ENCODE measurements at regions of chr11 and their contacts with region 1.

Region 1: DNA sequence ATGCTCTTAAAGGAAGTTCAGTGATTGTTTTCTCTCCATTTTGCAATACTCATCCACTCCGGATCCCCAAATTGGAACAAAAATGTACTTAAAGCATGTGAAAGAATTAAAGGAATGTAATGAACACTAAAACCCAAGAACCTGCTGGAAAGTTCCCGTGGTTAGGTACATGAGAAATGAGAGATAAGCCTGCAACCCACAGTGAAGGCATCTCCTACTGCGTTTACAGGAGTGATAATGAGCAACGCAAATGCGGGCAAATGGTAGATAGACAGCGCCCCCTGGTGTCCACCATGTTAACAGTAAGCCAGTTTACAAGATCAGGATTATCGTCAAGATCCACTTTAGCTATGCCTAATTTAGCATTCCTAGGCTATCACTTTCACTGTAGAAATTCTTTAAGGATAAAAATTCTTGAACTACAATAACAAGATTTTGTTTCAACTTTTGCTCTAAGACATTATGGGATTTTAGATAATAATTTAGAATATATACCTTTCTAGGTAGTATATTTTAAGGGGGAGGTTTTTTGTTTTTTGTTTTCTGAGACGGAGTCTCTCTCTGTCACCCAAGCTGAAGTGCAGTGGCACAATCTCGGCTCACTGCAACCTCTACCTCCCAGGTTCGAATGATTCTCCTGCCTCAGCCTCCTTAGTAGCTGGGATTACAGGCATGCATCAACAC is 29.9 kb downstream of the ALG9 start:
- DNase-seq: peak; percentile 66 to 92 (median 85)
- ATAC-seq: peak; percentile 95
- H3K4me3 ChIP-seq: no peak overlapping the region
- H3K4me3 Mint-ChIP-seq: no peak overlapping the region
- H3K27ac ChIP-seq: no peak overlapping the region
- H3K27ac Mint-ChIP-seq: no peak overlapping the region
- H3K4me1 ChIP-seq: no peaks in the 10 kb centered on the region
- H3K4me1 Mint-ChIP-seq: peaks cover 6% of the 10 kb centered on the region
- H3K27me3 ChIP-seq: no peaks in the 10 kb centered on the region
- H3K27me3 Mint-ChIP-seq: no peaks in the 10 kb centered on the region
- CTCF ChIP-seq: peak; percentile 87

Region 2: DNA sequence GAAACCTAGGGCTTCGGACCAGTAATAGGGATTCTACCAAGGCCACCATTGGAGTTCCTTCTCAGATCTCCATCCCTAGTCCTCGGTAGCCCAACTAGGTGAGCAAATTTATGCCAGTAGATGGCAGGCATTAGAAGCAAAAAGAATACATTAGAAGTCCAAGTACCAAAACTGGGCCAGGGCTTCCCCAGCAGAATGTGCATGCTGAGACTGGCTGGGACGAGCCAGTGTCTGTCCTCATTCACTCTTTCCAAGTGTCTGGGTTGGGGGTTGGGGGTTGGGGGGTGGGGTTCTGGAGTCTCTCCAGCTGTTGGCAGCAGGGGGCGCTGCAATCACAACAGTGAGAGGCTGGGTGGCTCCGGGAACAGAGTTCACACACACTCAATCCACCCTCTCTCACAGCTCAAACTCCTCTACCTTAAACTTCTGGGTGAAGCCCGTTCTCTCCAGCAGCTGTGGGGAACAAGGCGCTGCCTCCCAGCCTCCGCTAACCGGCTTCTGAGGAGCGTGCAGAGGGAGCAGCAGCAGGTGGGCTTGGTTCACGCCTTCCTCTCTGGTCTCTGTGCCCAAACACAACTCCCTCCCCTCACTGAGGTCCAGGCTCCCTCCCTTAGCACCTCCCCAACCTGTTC is 386.8 kb before region 1 on chr11:
- CTCF ChIA-PET with region 1: no interaction called
- POLR2A ChIA-PET with region 1: no interaction called
- intact Hi-C with region 1: loop called in 1 of 2 experiments (anchors 5 kb)
- DNase-seq: peak in 8 of 9 experiments; percentile 19 to 61 (median 49)
- ATAC-seq: peak; percentile 61
- H3K4me3 ChIP-seq: no peak overlapping the region
- H3K4me3 Mint-ChIP-seq: no peak overlapping the region
- H3K27ac ChIP-seq: no peak overlapping the region
- H3K27ac Mint-ChIP-seq: no peak overlapping the region
- H3K4me1 ChIP-seq: no peaks in the 10 kb centered on the region
- H3K4me1 Mint-ChIP-seq: no peaks in the 10 kb centered on the region
- H3K27me3 ChIP-seq: no peaks in the 10 kb centered on the region
- H3K27me3 Mint-ChIP-seq: peaks cover 8% of the 10 kb centered on the region
- CTCF ChIP-seq: peak; percentile 20

Region 3: GRCh38 chr11:111565114-111565720 is 276.3 kb before region 1 on chr11:
- CTCF ChIA-PET with region 1: interaction called, 8 read pairs
- POLR2A ChIA-PET with region 1: no interaction called
- intact Hi-C with region 1: loop called (anchors 1 kb)
- DNase-seq: peak; percentile 17 to 74 (median 63)
- ATAC-seq: no peak
- H3K4me3 ChIP-seq: no peak overlapping the region
- H3K4me3 Mint-ChIP-seq: no peak overlapping the region
- H3K27ac ChIP-seq: no peak overlapping the region
- H3K27ac Mint-ChIP-seq: no peak overlapping the region
- H3K4me1 ChIP-seq: no peaks in the 10 kb centered on the region
- H3K4me1 Mint-ChIP-seq: no peaks in the 10 kb centered on the region
- H3K27me3 ChIP-seq: no peaks in the 10 kb centered on the region
- H3K27me3 Mint-ChIP-seq: no peaks in the 10 kb centered on the region
- CTCF ChIP-seq: peak; percentile 98

Region 4: DNA sequence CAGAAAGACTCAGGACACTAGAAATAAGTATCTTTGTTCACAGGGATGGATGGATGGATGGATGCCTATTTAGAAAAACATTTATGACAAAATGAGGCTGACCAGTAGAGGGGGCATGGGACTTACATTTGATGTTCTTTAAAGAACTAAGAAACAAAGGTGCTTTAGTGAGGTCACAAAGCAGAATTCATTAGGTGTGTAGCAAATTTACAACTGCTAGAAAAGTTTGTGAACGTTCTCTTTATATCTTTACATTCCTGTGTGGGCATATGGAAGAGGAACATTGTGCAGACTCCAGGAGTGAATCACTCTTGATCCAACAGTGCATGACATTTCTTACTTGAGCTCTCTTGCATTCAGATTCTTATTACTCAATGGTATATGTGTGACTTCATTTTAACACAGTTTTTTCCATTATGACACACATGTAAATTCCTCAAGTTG is 255.1 kb before region 1 on chr11:
- CTCF ChIA-PET with region 1: interaction called, 41 read pairs
- POLR2A ChIA-PET with region 1: no interaction called
- intact Hi-C with region 1: loop called (anchors 1 kb)
- DNase-seq: peak in 8 of 9 experiments; percentile 8 to 77 (median 58)
- ATAC-seq: peak; percentile 83
- H3K4me3 ChIP-seq: no peak overlapping the region
- H3K4me3 Mint-ChIP-seq: no peak overlapping the region
- H3K27ac ChIP-seq: no peak overlapping the region
- H3K27ac Mint-ChIP-seq: no peak overlapping the region
- H3K4me1 ChIP-seq: no peaks in the 10 kb centered on the region
- H3K4me1 Mint-ChIP-seq: no peaks in the 10 kb centered on the region
- H3K27me3 ChIP-seq: no peaks in the 10 kb centered on the region
- H3K27me3 Mint-ChIP-seq: no peaks in the 10 kb centered on the region
- CTCF ChIP-seq: peak; percentile 76